ENCODE measurements at regions of chr20 and their contacts with region 1.

Region 1: GRCh38 chr20:10553326-10553984 is 118.3 kb downstream of the SLX4IP start:
- DNase-seq: peak; percentile 72
- ATAC-seq: peak; percentile 87
- H3K4me3 ChIP-seq: no peak overlapping the region
- H3K27ac ChIP-seq: no peak overlapping the region
- H3K4me1 ChIP-seq: peaks cover 5% of the 10 kb centered on the region
- H3K27me3 ChIP-seq: no peaks in the 10 kb centered on the region
- CTCF ChIP-seq: peak; percentile 83

Region 2: GRCh38 chr20:10647465-10647864 is 94.0 kb after region 1 on chr20:
- intact Hi-C with region 1: loop called (anchors 10 kb)
- DNase-seq: no peak
- ATAC-seq: no peak
- H3K4me3 ChIP-seq: no peak overlapping the region
- H3K27ac ChIP-seq: no peak overlapping the region
- H3K4me1 ChIP-seq: peaks cover 5% of the 10 kb centered on the region
- H3K27me3 ChIP-seq: no peaks in the 10 kb centered on the region
- CTCF ChIP-seq: no peak

Region 3: GRCh38 chr20:11274141-11274594 is 720.7 kb after region 1 on chr20:
- intact Hi-C with region 1: loop called (anchors 10 kb)
- DNase-seq: no peak
- ATAC-seq: peak; percentile 88
- H3K4me3 ChIP-seq: no peak overlapping the region
- H3K27ac ChIP-seq: no peak overlapping the region
- H3K4me1 ChIP-seq: no peaks in the 10 kb centered on the region
- H3K27me3 ChIP-seq: no peaks in the 10 kb centered on the region
- CTCF ChIP-seq: peak; percentile 65

Region 4: GRCh38 chr20:11544029-11544678 is 990.7 kb after region 1 on chr20:
- intact Hi-C with region 1: loop called (anchors 10 kb)
- DNase-seq: no peak
- ATAC-seq: peak; percentile 71
- H3K4me3 ChIP-seq: no peak overlapping the region
- H3K27ac ChIP-seq: no peak overlapping the region
- H3K4me1 ChIP-seq: no peaks in the 10 kb centered on the region
- H3K27me3 ChIP-seq: no peaks in the 10 kb centered on the region
- CTCF ChIP-seq: peak; percentile 55